Activated naive CD4-positive, alpha-beta T cell treated with anti-CD3 and anti-CD28 coated beads for 36 hours (primary cell): ENCODE measurements at regions of chr6 and their contacts with region 1.

Region 1: DNA sequence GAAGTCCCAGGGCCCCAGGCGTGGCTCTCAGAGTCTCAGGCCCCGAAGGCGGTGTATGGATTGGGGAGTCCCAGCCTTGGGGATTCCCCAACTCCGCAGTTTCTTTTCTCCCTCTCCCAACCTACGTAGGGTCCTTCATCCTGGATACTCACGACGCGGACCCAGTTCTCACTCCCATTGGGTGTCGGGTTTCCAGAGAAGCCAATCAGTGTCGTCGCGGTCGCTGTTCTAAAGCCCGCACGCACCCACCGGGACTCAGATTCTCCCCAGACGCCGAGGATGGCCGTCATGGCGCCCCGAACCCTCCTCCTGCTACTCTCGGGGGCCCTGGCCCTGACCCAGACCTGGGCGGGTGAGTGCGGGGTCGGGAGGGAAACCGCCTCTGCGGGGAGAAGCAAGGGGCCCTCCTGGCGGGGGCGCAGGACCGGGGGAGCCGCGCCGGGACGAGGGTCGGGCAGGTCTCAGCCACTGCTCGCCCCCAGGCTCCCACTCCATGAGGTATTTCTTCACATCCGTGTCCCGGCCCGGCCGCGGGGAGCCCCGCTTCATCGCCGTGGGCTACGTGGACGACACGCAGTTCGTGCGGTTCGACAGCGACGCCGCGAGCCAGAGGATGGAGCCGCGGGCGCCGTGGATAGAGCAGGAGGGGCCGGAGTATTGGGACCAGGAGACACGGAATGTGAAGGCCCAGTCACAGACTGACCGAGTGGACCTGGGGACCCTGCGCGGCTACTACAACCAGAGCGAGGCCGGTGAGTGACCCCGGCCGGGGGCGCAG is at the start of gene HLA-A:
- DNase-seq: peak; percentile 97
- H3K4me3 Mint-ChIP-seq: peak within 1 kb of the TSS; percentile 97
- H3K27ac Mint-ChIP-seq: peak within 1 kb of the TSS; percentile 99
- H3K4me1 Mint-ChIP-seq: peaks cover 53% of the 10 kb centered on the region
- H3K27me3 Mint-ChIP-seq: no peaks in the 10 kb centered on the region
- total RNA-seq, gene HLA-A: 1,509 to 1,515 TPM

Region 2: DNA sequence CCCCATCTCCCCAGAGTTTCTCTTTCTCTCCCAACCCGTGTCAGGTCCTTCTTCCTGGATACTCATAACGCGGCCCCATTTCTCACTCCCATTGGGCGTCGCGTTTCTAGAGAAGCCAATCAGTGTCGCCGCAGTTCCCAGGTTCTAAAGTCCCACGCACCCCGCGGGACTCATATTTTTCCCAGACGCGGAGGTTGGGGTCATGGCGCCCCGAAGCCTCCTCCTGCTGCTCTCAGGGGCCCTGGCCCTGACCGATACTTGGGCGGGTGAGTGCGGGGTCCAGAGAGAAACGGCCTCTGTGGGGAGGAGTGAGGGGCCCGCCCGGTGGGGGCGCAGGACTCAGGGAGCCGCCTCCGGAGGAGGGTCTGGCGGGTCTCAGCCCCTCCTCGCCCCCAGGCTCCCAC is 219.2 kb before region 1 on chr6 and contains the start of gene HLA-F:
- CTCF ChIA-PET with region 1: no interaction called
- intact Hi-C with region 1: loop called (anchors 5 kb)
- DNase-seq: peak; percentile 93
- H3K4me3 Mint-ChIP-seq: peak within 1 kb of the TSS; percentile 90
- H3K27ac Mint-ChIP-seq: peak within 1 kb of the TSS; percentile 97
- H3K4me1 Mint-ChIP-seq: peaks cover 55% of the 10 kb centered on the region
- H3K27me3 Mint-ChIP-seq: no peaks in the 10 kb centered on the region
- total RNA-seq, gene HLA-F: 282 to 310 TPM

Region 3: GRCh38 chr6:29909985-29910384 is 32.5 kb before region 1 on chr6:
- CTCF ChIA-PET with region 1: no interaction called
- intact Hi-C with region 1: no loop called
- DNase-seq: no peak
- H3K4me3 Mint-ChIP-seq: no peak overlapping the region
- H3K27ac Mint-ChIP-seq: no peak overlapping the region
- H3K4me1 Mint-ChIP-seq: peaks cover 13% of the 10 kb centered on the region
- H3K27me3 Mint-ChIP-seq: peaks cover 13% of the 10 kb centered on the region

Region 4: GRCh38 chr6:29926413-29927274 is 15.8 kb before region 1 on chr6:
- CTCF ChIA-PET with region 1: no interaction called
- intact Hi-C with region 1: loop called (anchors 1 kb)
- DNase-seq: peak; percentile 90
- H3K4me3 Mint-ChIP-seq: peak overlapping the region; percentile 96
- H3K27ac Mint-ChIP-seq: peak overlapping the region; percentile 94
- H3K4me1 Mint-ChIP-seq: peaks cover 31% of the 10 kb centered on the region
- H3K27me3 Mint-ChIP-seq: no peaks in the 10 kb centered on the region

Region 5: GRCh38 chr6:29976588-29977424 is 34.3 kb after region 1 on chr6:
- CTCF ChIA-PET with region 1: no interaction called
- intact Hi-C with region 1: loop called (anchors 5 kb)
- DNase-seq: peak; percentile 76
- H3K4me3 Mint-ChIP-seq: peak overlapping the region; percentile 81
- H3K27ac Mint-ChIP-seq: no peak overlapping the region
- H3K4me1 Mint-ChIP-seq: peaks cover 31% of the 10 kb centered on the region
- H3K27me3 Mint-ChIP-seq: peaks cover 34% of the 10 kb centered on the region

Region 6: DNA sequence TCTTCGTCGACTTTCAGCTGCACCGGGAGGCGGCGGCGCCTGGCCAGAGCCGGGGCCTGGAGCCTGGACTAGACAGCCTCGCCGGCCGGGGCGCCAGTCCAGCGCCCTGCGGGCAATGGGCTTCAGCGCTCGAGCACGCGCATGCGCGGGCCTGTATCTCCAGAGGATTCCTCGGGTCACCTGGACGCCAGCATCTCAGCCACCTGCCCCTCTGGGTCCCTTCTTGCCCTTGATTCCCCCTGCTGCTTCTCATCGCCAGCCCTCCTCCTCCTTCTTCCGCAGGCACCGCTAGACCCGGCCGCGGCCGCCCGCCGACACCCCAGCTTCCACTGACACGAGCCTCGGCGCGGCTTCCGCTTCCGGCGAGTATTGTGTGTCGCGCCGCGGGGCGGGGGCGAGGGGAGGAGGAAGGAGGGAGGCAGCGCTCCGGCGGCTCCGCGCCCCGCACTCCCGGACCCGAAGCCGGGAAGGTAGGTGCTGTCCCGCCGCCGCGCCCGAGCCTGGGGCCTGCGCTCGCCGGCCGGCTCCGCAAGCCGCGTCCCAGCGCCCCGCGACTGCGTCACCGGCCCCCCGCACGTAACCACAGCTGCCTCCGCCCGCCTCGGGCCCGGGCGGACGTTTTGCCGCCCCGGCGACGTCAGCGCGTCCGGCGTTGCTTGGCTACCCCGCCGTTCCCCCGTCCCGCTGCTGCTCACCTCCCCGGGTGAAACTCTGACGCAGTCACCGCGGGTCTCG is 384.2 kb after region 1 on chr6 and contains the start of gene TRIM39:
- CTCF ChIA-PET with region 1: no interaction called
- intact Hi-C with region 1: loop called (anchors 5 kb)
- DNase-seq: peak; percentile 87
- H3K4me3 Mint-ChIP-seq: peak within 1 kb of the TSS; percentile 96
- H3K27ac Mint-ChIP-seq: peak within 1 kb of the TSS; percentile 97
- H3K4me1 Mint-ChIP-seq: peaks cover 49% of the 10 kb centered on the region
- H3K27me3 Mint-ChIP-seq: no peaks in the 10 kb centered on the region
- total RNA-seq, gene TRIM39: 14.2 to 14.5 TPM